ENCODE measurements at regions of chr12 and their contacts with region 1.

Region 1: DNA sequence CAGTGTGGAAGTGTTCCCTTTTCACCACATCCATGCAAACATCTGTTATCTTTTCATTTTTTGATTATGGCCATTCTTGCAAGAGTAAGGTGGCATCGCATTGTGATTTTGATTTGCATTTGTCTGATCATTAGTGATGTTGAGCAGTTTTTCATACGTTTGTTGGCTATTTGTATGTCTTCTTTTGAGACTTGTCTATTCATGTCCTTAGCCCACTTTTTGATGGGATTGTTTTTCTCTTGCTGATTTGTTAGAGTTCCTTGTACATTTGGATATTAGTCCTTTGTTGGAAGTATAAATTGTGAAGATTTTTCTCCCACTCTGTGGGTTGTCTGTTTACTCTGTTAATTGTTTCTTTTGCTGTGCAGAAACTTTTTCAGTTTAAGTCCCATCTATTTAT is 244.5 kb upstream of the PRICKLE1 start:
- DNase-seq: no peak
- H3K4me3 ChIP-seq: no peak overlapping the region
- H3K4me3 Mint-ChIP-seq: no peak overlapping the region
- H3K27ac Mint-ChIP-seq: no peak overlapping the region
- H3K4me1 ChIP-seq: peaks cover 5% of the 10 kb centered on the region; the same call in 1 of the 2 replicates
- H3K4me1 Mint-ChIP-seq: peaks cover 8% of the 10 kb centered on the region
- H3K27me3 ChIP-seq: no peaks in the 10 kb centered on the region
- H3K27me3 Mint-ChIP-seq: no peaks in the 10 kb centered on the region
- CTCF ChIP-seq: no peak

Region 2: DNA sequence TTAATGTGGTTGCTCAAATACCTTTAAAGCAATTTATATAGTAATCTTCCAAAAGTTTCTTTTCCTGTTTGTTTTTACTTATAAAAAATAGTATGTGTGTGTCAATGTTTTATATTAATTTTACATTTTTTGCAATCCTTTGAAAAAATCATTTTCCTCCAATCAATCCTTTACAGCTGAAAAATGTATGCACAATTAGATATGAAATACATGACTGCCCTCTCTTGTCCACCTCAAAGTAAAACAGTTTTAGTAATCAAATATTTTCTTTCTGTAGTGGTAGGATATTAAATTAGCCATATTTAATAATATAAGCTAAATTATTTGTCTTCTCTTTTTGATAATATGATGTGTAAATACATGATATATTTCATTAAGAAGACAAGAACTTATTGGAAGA is 448.0 kb after region 1 on chr12:
- CTCF ChIA-PET with region 1: no interaction called
- POLR2A ChIA-PET with region 1: no interaction called
- intact Hi-C with region 1: loop called (anchors 10 kb)
- DNase-seq: no peak
- H3K4me3 ChIP-seq: no peak overlapping the region
- H3K4me3 Mint-ChIP-seq: no peak overlapping the region
- H3K27ac Mint-ChIP-seq: no peak overlapping the region
- H3K4me1 ChIP-seq: no peaks in the 10 kb centered on the region
- H3K4me1 Mint-ChIP-seq: peaks cover 10% of the 10 kb centered on the region
- H3K27me3 ChIP-seq: no peaks in the 10 kb centered on the region
- H3K27me3 Mint-ChIP-seq: no peaks in the 10 kb centered on the region
- CTCF ChIP-seq: no peak